Mammary epithelial cell (primary cell): ENCODE measurements at regions of chrX and their contacts with region 1.

Region 1: DNA sequence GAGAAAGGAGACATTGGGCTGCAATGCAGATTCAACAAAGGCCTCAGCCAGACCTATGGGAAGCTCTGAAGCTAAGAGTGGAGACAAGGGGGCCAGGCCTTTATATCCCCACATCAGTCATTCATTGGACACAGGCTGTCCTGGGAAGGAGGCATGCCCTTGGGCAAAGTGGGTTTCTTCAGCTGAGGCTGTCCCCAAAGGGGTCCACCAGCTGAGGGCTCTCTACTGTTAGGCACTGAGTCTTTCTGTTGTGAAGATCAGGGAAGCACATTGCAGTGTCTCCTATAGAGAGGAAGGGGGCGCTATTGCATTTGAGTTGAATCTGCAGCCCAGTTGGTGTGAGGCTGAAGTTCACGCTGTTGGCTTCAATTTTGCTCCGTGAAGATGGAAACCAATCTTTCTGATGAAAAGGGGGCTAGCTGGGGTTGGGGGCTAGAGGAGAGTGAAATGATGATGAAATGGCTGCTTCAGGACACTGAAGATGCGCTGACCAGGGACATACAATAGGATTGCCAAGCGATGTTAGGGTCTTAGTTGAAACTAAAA is 48.0 kb downstream of the SLC25A5 start:
- DNase-seq: peak; percentile 29
- H3K4me3 ChIP-seq: no peak overlapping the region
- H3K27ac ChIP-seq: no peak overlapping the region
- H3K4me1 ChIP-seq: no peaks in the 10 kb centered on the region
- H3K27me3 ChIP-seq: no peaks in the 10 kb centered on the region
- CTCF ChIP-seq: peak; percentile 61 to 78

Region 2: DNA sequence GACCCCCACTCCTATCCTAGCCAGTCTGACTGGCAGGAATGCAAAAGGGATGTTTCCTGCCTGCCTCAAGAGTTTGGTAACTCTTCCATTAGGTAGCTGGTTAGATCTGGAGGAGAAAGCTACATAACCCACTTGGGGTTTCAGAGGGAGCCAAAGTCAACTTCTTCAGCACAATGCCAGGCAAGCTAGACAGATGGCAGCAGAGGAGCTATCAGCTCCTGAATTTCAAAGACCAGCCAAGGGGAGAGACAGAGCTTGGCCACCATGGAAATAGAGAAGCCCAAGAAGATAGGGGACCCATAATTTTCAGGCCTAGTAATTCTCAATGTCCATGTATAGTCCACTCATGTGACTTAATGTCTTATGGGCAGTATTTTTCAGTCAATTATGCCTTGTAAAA is 223.8 kb before region 1 on chrX:
- CTCF ChIA-PET with region 1: no interaction called
- dilution Hi-C with region 1: no loop called
- in situ Hi-C with region 1: no loop called
- intact Hi-C with region 1: loop called (anchors 2 kb)
- DNase-seq: peak; percentile 11
- H3K4me3 ChIP-seq: no peak overlapping the region
- H3K27ac ChIP-seq: no peak overlapping the region
- H3K4me1 ChIP-seq: no peaks in the 10 kb centered on the region
- H3K27me3 ChIP-seq: no peaks in the 10 kb centered on the region
- CTCF ChIP-seq: peak; percentile 36 to 41

Region 3: DNA sequence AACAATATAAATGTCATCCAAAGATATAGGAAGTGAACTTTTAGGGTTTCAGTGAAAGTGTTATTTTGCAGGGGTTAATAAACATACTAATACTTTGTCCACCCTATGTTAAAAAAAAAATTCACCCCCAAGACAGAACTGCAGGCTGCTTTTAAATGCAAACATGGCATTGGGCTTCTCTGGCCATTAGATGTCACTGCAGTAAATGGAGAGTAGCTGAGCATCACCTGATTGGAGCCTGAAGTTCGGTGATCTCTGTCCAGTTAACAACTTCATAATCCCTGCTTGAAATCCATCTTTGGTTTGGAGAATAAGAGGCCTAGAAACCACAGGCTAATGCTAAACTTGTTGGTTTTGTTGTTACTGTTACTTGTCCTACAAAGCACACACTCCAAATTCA is 98.4 kb before region 1 on chrX:
- CTCF ChIA-PET with region 1: interaction called, 3 read pairs
- dilution Hi-C with region 1: no loop called
- in situ Hi-C with region 1: no loop called
- intact Hi-C with region 1: loop called (anchors 2 kb)
- DNase-seq: no peak
- H3K4me3 ChIP-seq: no peak overlapping the region
- H3K27ac ChIP-seq: no peak overlapping the region
- H3K4me1 ChIP-seq: no peaks in the 10 kb centered on the region
- H3K27me3 ChIP-seq: no peaks in the 10 kb centered on the region
- CTCF ChIP-seq: peak in 1 of 2 donors; percentile 25

Region 4: GRCh38 chrX:119488749-119489148 is 27.5 kb before region 1 on chrX:
- CTCF ChIA-PET with region 1: no interaction called
- dilution Hi-C with region 1: no loop called
- in situ Hi-C with region 1: no loop called
- intact Hi-C with region 1: loop called (anchors 1 kb)
- DNase-seq: no peak
- H3K4me3 ChIP-seq: no peak overlapping the region
- H3K27ac ChIP-seq: no peak overlapping the region
- H3K4me1 ChIP-seq: peaks cover 12% of the 10 kb centered on the region
- H3K27me3 ChIP-seq: no peaks in the 10 kb centered on the region
- CTCF ChIP-seq: peak; percentile 46 to 59

Region 5: DNA sequence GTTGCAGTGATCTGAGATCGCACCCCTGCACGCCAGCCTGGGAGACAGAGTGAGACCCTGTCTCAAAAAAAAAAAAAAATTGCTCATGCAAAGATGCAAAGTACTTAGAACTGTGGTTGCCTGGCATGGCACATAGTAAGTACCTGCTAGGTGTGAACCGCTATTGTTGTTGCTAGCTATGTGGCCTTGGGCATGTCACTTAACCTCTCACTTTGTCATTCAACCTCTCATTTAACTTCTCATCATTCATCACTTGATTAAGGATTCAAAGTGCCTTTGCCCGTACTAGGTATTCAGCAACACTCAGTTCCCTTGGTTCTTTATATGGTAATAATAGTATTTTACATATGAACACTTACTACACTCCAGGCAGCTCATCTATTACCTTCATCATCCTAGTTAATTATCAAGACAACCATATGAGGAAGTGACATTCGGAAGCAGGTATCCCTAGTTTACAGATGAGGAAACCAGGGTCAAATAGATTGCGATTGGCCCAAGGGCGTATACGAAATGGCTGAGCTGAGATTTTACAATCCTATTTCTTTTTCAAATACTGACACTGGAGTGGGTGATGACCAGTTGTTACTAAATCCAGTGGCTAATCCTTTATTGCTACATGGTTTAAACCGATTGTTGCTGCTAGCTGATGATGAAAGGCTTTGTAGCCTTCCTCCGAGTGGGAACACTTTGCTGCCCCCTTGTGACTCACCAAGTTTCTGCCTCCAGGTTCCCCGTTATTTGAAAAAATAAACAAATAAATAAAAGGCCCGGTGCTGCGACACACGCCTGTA is 213.4 kb after region 1 on chrX:
- CTCF ChIA-PET with region 1: no interaction called
- dilution Hi-C with region 1: no loop called
- in situ Hi-C with region 1: no loop called
- intact Hi-C with region 1: loop called (anchors 1 kb)
- DNase-seq: peak; percentile 34
- H3K4me3 ChIP-seq: no peak overlapping the region
- H3K27ac ChIP-seq: no peak overlapping the region
- H3K4me1 ChIP-seq: no peaks in the 10 kb centered on the region
- H3K27me3 ChIP-seq: peaks cover 2% of the 10 kb centered on the region
- CTCF ChIP-seq: peak; percentile 32 to 57

Region 6: GRCh38 chrX:119880552-119881437 is 364.6 kb after region 1 on chrX:
- CTCF ChIA-PET with region 1: no interaction called
- dilution Hi-C with region 1: no loop called
- in situ Hi-C with region 1: no loop called
- intact Hi-C with region 1: loop called (anchors 10 kb)
- DNase-seq: peak; percentile 29
- H3K4me3 ChIP-seq: no peak overlapping the region
- H3K27ac ChIP-seq: no peak overlapping the region
- H3K4me1 ChIP-seq: no peaks in the 10 kb centered on the region
- H3K27me3 ChIP-seq: no peaks in the 10 kb centered on the region
- CTCF ChIP-seq: peak; percentile 59 to 69